Right cardiac atrium (tissue), 5 donors: ENCODE measurements at regions of chr2 and their contacts with region 1.

Region 1: GRCh38 chr2:60347781-60348180 is 205.7 kb downstream of the BCL11A start:
- DNase-seq: no peak
- ATAC-seq: no peak
- H3K4me3 ChIP-seq: no peak overlapping the region
- H3K27ac ChIP-seq: no peak overlapping the region
- H3K4me1 ChIP-seq: no peaks in the 10 kb centered on the region
- H3K27me3 ChIP-seq: no peaks in the 10 kb centered on the region

Region 2: DNA sequence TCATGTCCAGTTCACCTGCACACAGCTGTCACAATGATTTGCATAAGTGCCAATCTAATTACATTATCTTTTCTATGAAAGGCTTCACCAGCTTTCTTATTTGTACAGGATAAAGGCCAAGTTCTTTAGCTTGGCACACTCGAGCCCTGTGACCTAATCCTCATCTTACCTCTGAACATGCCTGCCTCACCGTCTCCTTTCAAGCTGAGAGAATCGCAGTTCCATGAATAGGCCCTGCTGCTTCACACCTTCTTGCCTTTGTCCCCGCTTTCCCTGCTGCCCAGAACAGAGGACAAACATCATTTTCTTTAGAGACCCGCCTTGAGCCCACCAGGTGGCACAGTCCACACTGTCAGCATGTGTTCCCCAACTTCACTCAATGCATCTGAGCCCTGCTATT is 889.0 kb before region 1 on chr2:
- intact Hi-C with region 1: loop called in 1 of 4 experiments (anchors 10 kb)
- DNase-seq: no peak
- ATAC-seq: no peak
- H3K4me3 ChIP-seq: no peak overlapping the region
- H3K27ac ChIP-seq: no peak overlapping the region
- H3K4me1 ChIP-seq: no peaks in the 10 kb centered on the region
- H3K27me3 ChIP-seq: no peaks in the 10 kb centered on the region